ENCODE measurements at regions of chr2 and their contacts with region 1.

Region 1: GRCh38 chr2:209334198-209335017 is 89.4 kb upstream of the MAP2 start:
- DNase-seq: peak; percentile 57
- ATAC-seq: peak; percentile 76
- H3K4me3 Mint-ChIP-seq: no peak overlapping the region
- H3K27ac Mint-ChIP-seq: no peak overlapping the region
- H3K4me1 Mint-ChIP-seq: peaks cover 13% of the 10 kb centered on the region
- H3K27me3 Mint-ChIP-seq: peaks cover 9% of the 10 kb centered on the region
- CTCF ChIP-seq: peak; percentile 73

Region 2: DNA sequence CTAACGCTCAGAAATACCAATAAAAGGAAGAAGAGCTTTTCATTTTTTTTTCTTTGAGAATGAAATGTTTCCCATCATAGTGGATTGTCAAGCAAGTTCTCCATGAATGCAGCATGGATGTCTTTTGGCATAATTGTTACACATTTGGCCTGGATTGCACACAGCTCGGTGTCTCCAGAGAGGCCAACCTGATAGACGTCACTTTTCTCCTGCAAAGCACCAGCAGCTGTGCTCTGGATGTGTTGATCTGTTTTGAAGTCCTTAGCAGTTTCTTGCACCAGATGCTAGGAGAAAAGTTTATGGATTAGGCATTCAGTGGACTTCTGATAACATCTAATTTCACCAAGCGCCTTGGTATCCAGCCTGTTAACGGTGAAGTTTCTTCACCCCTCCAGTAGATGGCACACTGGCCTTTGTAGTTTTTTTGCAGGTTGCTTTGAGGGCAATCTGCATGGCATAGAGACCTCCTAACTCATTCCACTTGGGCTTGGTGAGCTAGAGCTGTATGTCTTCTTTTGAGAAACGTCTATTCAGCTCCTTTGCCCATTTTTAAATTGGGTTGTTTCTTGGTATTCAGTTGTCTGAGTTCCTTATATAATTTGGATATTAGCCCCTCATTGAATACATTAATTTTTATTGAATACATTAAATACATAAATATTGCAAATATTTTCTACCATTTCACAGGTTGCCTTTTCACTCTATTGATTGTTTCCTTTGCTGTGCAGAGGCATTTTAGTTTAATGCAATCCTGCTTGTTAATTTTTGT is 868.1 kb before region 1 on chr2:
- CTCF ChIA-PET with region 1: interaction called, 17 read pairs
- POLR2A ChIA-PET with region 1: no interaction called
- DNase-seq: peak; percentile 46
- ATAC-seq: peak; percentile 96
- H3K4me3 Mint-ChIP-seq: no peak overlapping the region
- H3K27ac Mint-ChIP-seq: no peak overlapping the region
- H3K4me1 Mint-ChIP-seq: no peaks in the 10 kb centered on the region
- H3K27me3 Mint-ChIP-seq: peaks cover 27% of the 10 kb centered on the region
- CTCF ChIP-seq: peak; percentile 67

Region 3: DNA sequence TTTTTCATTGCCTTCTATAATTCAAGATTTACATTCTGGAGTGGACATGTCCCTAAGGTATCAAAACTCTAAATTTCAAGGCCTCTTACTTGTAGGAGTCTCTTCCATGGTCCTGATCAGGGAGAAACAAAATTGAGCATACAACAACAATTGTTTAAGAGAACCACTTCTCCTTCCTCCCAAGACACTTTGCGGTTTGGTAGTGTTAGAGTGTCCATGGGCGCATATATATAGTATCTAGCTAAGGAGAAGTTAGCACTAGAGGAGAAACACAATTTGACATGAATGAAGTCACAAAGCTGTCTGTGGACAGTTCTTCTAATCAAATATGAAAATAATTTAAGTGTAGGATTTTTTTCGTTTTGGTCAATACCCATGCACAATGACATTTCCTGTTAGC is 259.7 kb before region 1 on chr2:
- CTCF ChIA-PET with region 1: no interaction called
- POLR2A ChIA-PET with region 1: no interaction called
- DNase-seq: no peak
- ATAC-seq: no peak
- H3K4me3 Mint-ChIP-seq: no peak overlapping the region
- H3K27ac Mint-ChIP-seq: no peak overlapping the region
- H3K4me1 Mint-ChIP-seq: peaks cover 18% of the 10 kb centered on the region
- H3K27me3 Mint-ChIP-seq: no peaks in the 10 kb centered on the region
- CTCF ChIP-seq: no peak

Region 4: DNA sequence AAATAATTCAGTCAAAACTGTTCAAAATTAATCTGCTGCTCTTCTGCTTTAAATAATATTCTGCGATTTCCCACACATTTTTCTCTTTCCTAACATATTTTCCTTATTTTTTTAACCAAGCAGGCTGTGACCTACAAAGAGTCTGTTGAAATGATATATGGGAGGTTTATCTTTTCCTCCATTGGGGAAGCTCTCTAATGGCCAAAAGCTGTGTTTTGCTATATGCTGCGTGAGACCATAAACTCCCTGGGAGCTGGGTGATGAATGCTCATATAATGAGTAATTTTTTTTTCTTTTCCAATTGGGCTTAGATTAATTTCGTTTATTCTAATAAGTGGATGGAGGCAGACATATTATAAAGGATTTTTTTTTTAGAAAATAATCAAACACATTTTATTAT is 17.2 kb after region 1 on chr2:
- CTCF ChIA-PET with region 1: interaction called, 10 read pairs
- POLR2A ChIA-PET with region 1: no interaction called
- DNase-seq: no peak
- ATAC-seq: no peak
- H3K4me3 Mint-ChIP-seq: no peak overlapping the region
- H3K27ac Mint-ChIP-seq: no peak overlapping the region
- H3K4me1 Mint-ChIP-seq: peaks cover 22% of the 10 kb centered on the region
- H3K27me3 Mint-ChIP-seq: peaks cover 23% of the 10 kb centered on the region
- CTCF ChIP-seq: no peak

Region 5: GRCh38 chr2:209401788-209402187 is 67.4 kb after region 1 on chr2:
- CTCF ChIA-PET with region 1: no interaction called
- POLR2A ChIA-PET with region 1: no interaction called
- DNase-seq: no peak
- ATAC-seq: no peak
- H3K4me3 Mint-ChIP-seq: no peak overlapping the region
- H3K27ac Mint-ChIP-seq: no peak overlapping the region
- H3K4me1 Mint-ChIP-seq: no peaks in the 10 kb centered on the region
- H3K27me3 Mint-ChIP-seq: no peaks in the 10 kb centered on the region
- CTCF ChIP-seq: no peak